ENCODE measurements at regions of chr6 and their contacts with region 1.

Region 1: DNA sequence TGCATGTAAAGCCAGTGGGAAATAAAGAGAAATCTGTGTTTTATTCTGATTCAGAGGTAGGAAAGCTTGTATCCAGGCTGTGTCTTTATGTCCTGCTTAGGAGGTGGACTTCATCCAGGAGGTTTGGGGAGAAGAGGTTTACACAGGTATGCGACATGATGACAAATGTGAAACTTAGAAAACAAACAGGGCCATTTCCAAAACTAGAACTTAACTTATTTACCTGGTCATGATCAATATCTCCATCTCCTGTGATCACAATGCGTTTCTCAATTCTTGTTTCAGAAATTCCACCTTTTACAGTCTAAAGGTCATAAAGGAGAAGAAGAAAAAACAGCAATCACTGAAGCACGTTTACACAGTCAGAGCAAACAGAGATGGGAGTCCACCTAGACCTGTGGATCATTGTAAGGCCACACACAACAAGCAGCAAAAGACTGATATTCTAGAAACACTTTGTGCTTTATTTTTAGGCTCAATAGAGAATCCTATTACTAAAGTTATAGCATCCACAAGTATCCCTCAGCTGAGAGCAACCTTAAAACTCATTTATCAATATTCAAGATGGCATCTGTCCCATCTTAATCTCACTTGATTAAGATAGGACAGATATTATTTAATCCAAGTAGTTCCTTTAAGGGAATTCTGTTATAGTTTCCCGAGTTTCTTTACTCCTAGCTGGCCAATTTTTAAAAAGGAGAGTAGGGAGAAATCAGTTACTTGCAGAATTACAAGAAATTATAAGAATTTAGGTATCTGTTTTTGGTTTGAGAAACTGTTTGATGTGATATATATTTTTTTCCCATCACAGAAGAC is 36.4 kb downstream of the SMLR1 start:
- DNase-seq: peak; percentile 98
- ATAC-seq: peak; percentile 93
- H3K4me3 ChIP-seq: peak overlapping the region in 1 of 3 experiments; percentile 15; a peak in 1 of 6 replicates
- H3K27ac ChIP-seq: peak overlapping the region; percentile 67
- H3K4me1 ChIP-seq: peaks cover 68% of the 10 kb centered on the region
- H3K27me3 ChIP-seq: no peaks in the 10 kb centered on the region
- CTCF ChIP-seq: no peak
- EP300 ChIP-seq: peak; percentile 72 to 100; a peak in 3 of 4 replicates
- POLR2A ChIP-seq: no peak
- RAD21 ChIP-seq: 0 out of 2 replicates have a peak, but pooled peaks have one; percentile 29

Region 2: DNA sequence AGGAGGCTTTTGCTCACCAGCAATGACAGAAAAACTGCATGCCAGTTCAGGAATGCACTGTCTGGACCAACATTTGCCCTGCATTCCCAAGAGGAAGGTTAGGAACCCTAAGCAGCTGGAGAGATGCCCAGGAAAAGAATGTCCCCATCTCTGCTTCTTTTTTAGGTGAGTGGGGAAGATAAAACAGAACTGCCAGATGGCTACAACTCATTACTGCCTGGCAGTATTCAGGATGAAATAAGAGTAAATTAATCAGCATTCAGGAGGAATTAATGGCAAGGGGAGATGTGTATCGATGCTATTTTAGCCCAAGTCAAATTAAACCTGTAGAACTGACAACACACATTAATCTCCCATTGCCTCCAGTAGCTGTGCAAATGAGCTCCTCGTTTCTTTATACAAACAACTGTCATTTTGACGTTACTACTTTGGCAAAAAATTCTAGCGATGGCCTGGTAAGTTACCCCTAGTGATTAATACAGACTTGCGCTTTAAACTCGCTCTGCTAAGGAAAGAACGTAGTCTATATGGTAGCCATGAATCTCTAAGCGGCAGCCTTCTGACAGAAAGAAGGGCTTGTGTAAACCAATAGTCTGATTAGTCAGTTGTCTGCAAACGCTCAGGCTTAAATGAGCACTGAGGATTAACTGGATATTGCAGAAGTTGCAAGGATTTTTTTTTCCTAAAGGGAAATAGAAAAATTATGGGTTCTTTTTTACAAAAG is 53.2 kb before region 1 on chr6:
- CTCF ChIA-PET with region 1: no interaction called
- POLR2A ChIA-PET with region 1: no interaction called
- in situ Hi-C with region 1: no loop called
- intact Hi-C with region 1: loop called (anchors 1 kb)
- DNase-seq: no peak
- ATAC-seq: peak; percentile 26; the same call in 2 of the 3 replicates
- H3K4me3 ChIP-seq: no peak overlapping the region
- H3K27ac ChIP-seq: no peak overlapping the region
- H3K4me1 ChIP-seq: peaks cover 44% of the 10 kb centered on the region
- H3K27me3 ChIP-seq: no peaks in the 10 kb centered on the region
- CTCF ChIP-seq: no peak
- EP300 ChIP-seq: no peak
- POLR2A ChIP-seq: no peak
- RAD21 ChIP-seq: no peak

Region 3: GRCh38 chr6:130933712-130934200 is 70.1 kb after region 1 on chr6:
- CTCF ChIA-PET with region 1: no interaction called
- POLR2A ChIA-PET with region 1: no interaction called
- in situ Hi-C with region 1: no loop called
- intact Hi-C with region 1: loop called (anchors 1 kb)
- DNase-seq: peak; percentile 98
- ATAC-seq: peak; percentile 97
- H3K4me3 ChIP-seq: peak overlapping the region in 2 of 3 experiments; percentile 34 to 47; a peak in 3 of 6 replicates
- H3K27ac ChIP-seq: peak overlapping the region; percentile 73
- H3K4me1 ChIP-seq: peaks cover 75% of the 10 kb centered on the region
- H3K27me3 ChIP-seq: no peaks in the 10 kb centered on the region
- CTCF ChIP-seq: no peak
- EP300 ChIP-seq: peak; percentile 84 to 95; a peak in 3 of 4 replicates
- POLR2A ChIP-seq: no peak
- RAD21 ChIP-seq: no peak; the same call in none of the 2 replicates

Measured in HepG2 (cell line).